Activated T-helper 2 cell treated with anti-CD3 and anti-CD28 coated beads, Interferon-gamma antibody, Interleukin-2, Interleukin-4, amounts not matched to agents 10 μg/mL and 5 μg/mL and 100 μg/mL, durations not matched to agents 14 hours and 24 hours and 36 hours (primary cell): ENCODE measurements at regions of chr10 and their contacts with region 1.

Region 1: GRCh38 chr10:24826019-24826418 is 102.3 kb upstream of the ARHGAP21 start:
- DNase-seq: no peak
- H3K4me3 Mint-ChIP-seq: peak overlapping the region; percentile 31
- H3K27ac Mint-ChIP-seq: peak overlapping the region; percentile 33
- H3K4me1 Mint-ChIP-seq: peaks cover 35% of the 10 kb centered on the region
- H3K27me3 Mint-ChIP-seq: peaks cover 38% of the 10 kb centered on the region

Region 2: GRCh38 chr10:24465891-24466818 is 359.9 kb before region 1 on chr10:
- intact Hi-C with region 1: loop called (anchors 10 kb)
- DNase-seq: peak; percentile 31
- H3K4me3 Mint-ChIP-seq: peak overlapping the region; percentile 19
- H3K27ac Mint-ChIP-seq: peak overlapping the region; percentile 57
- H3K4me1 Mint-ChIP-seq: peaks cover 48% of the 10 kb centered on the region
- H3K27me3 Mint-ChIP-seq: peaks cover 21% of the 10 kb centered on the region

Region 3: DNA sequence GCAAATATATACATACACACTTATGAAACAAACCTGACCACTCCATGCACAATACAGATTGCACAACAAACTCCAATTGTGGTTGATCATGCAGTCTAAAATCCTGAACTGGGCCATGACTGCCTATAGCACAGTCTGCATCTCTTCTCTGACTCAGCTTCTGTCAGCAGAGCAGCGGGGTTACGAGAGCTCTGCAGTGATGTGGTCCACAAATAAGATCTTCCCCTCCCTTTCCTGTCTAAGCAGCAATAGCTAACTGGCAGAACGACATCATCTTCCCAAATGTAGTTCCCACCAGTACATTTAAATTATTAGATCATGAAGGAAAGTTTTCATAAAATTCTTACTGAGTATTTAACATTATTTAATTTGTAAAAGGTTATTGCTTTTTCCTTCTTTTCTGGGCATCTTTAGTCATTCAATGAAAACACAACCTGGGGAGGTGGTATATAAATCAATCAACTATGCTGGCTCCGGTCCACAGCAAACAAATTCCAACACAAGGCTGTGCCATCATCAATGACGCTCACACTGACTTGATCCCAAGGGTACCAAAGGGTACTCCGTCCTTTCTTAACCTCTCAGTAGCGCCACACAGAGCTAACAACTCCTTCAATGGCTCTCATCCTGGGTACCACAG is 119.4 kb before region 1 on chr10:
- intact Hi-C with region 1: loop called (anchors 1 kb)
- DNase-seq: no peak
- H3K4me3 Mint-ChIP-seq: no peak overlapping the region
- H3K27ac Mint-ChIP-seq: no peak overlapping the region
- H3K4me1 Mint-ChIP-seq: peaks cover 13% of the 10 kb centered on the region
- H3K27me3 Mint-ChIP-seq: no peaks in the 10 kb centered on the region

Region 4: GRCh38 chr10:24866604-24867583 is 40.9 kb after region 1 on chr10:
- intact Hi-C with region 1: loop called (anchors 5 kb)
- DNase-seq: no peak
- H3K4me3 Mint-ChIP-seq: no peak overlapping the region
- H3K27ac Mint-ChIP-seq: peak overlapping the region; percentile 43
- H3K4me1 Mint-ChIP-seq: peaks cover 26% of the 10 kb centered on the region
- H3K27me3 Mint-ChIP-seq: no peaks in the 10 kb centered on the region

Region 5: DNA sequence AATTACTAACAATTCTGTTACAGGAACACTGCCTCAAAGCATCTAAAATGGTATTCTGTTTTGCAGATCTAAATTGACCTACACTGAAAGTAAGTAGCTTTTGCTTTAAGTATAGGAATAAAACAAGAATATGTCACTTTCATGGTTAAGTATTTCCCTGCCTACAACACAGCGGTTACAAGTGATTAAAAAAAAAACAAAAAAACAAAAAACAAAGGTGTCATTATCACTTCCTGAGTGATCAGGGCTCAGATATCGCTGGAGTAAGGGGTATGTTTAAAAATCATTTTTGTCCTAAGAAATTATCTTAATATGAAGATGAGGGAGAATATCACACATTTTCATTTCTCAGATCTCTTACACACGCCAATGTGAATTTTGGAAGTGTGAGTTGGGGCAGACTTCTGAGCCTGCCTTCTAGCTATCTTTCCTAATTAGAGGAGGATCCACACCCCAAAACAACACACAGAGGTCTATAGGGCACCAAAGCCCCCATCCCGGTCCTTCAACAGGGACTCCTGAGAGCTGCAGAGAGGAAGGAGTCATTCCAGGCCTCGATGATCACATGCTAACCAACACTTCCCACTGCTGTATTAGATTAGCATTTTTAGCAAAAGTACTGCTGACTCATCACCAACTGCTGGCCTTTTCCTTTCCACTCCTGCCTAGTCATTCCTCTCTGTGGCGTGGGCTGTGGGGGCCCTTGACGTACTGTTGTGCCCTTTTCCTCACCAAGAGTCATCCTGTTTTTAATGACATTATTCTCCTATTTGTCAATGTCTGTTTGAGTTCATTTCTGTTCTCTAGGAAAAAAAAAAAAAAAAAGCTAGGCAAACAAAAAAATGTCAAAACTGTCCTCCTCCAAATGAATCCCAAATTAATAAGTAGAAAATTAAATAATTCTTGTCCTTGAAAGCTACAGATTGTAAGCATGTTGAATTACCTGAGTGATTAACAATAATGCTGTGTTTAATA is 95.2 kb after region 1 on chr10:
- intact Hi-C with region 1: loop called (anchors 1 kb)
- DNase-seq: peak; percentile 25
- H3K4me3 Mint-ChIP-seq: no peak overlapping the region
- H3K27ac Mint-ChIP-seq: peak overlapping the region; percentile 85
- H3K4me1 Mint-ChIP-seq: peaks cover 25% of the 10 kb centered on the region
- H3K27me3 Mint-ChIP-seq: no peaks in the 10 kb centered on the region

Region 6: DNA sequence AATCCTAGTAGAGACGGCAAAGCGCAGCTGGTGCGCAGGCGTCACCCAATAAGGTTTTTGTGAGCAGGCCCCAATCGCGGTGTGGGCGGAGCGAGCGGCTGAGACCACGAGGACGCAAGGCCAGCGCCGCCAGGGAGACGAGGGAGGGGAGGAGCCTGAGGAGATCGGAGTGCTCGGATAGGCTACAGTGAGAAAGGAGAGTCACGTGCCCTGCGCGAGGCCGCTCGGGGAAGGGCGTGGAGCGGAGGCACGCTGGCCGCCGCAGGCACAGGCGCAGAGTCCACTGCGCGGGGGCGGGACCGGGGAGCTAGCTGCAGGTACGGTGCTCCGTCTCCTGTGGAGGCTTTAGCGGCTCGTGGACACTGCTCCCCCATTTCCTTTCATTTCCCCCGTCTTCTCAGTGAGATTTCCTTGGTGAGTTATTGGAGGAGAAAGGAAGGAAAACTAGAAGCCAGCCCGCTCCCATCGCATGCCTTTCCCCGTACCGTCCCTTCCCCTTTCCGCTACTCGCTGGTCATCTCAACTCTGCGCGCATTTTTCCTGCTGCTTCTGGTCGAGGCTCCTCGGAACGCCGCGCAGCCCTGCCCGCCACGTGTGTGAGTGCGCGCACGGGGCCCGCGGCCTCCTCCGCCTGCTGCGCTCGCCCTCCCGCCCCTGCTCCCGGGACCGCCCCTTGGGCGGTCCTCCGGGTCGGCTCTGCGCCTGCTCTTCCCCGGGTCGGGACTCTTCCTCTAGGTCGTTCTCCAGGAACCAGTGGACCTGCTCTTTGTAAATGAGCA is 190.5 kb after region 1 on chr10 and contains the start of gene THNSL1:
- intact Hi-C with region 1: loop called (anchors 1 kb)
- DNase-seq: peak; percentile 97
- H3K4me3 Mint-ChIP-seq: peak within 1 kb of the TSS; percentile 89
- H3K27ac Mint-ChIP-seq: peak within 1 kb of the TSS; percentile 95
- H3K4me1 Mint-ChIP-seq: peaks cover 14% of the 10 kb centered on the region
- H3K27me3 Mint-ChIP-seq: peaks cover 4% of the 10 kb centered on the region
- total RNA-seq, gene THNSL1: 3.1 TPM in 2 replicates